ENCODE measurements at regions of chr2 and their contacts with region 1.

Region 1: GRCh38 chr2:42053791-42054701 is 6.2 kb downstream of the PKDCC start:
- DNase-seq: peak in 2 of 5 donors; percentile 33 to 87
- H3K4me3 ChIP-seq: no peak overlapping the region
- H3K27ac ChIP-seq: peak overlapping the region; percentile 74 to 81
- H3K4me1 ChIP-seq: peaks cover 6 to 43% (median 38%) of the 10 kb centered on the region in 3 donors
- H3K27me3 ChIP-seq: no peaks in the 10 kb centered on the region
- CTCF ChIP-seq: no peak

Region 2: GRCh38 chr2:41966431-41966893 is 87.6 kb before region 1 on chr2:
- intact Hi-C with region 1: loop called (anchors 10 kb)
- DNase-seq: peak; percentile 75 to 98 (median 88)
- H3K4me3 ChIP-seq: no peak overlapping the region
- H3K27ac ChIP-seq: peak overlapping the region; percentile 49 to 74
- H3K4me1 ChIP-seq: peaks cover 25 to 28% (median 26%) of the 10 kb centered on the region in 3 donors
- H3K27me3 ChIP-seq: no peaks in the 10 kb centered on the region
- CTCF ChIP-seq: no peak

Measured in kidney (tissue), 22 donors.